Gastrocnemius medialis (tissue), 4 donors: ENCODE measurements at regions of chr1 and their contacts with region 1.

Region 1: DNA sequence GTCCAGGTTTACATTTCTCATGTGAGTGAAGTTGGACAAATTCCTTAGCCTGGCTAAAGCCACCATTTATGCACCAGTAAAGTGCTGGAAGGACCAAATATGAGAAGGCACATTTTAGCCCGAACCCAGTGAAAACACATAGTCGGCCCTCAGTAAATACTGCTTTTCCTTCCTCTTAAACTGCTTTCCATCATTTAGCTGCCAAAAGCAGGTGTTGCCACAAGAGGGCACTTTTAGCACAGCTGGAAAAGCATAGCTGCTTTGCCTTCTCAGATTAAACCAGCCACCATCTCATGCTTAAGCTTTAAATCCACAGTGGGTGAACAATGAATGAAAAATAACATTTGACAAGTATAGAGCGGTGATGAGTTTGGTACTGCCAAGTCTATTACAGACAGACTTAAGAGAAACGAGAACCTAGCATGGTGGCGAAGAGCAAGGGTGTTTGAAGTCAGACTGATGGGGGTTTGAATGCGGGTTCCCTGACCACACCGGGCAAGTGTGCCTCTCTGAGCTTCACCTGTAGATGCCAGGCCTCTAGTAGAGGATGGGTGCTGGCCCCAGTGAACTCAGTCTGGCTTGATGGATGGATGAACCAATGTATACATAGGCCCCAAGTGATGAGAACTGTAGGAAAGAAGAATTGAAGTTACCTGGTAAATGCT is 57.8 kb downstream of the SLC35D1 start:
- DNase-seq: peak in 1 of 2 donors; percentile 60
- ATAC-seq: peak; percentile 59 to 62
- H3K4me3 ChIP-seq: no peak overlapping the region
- H3K27ac ChIP-seq: no peak overlapping the region
- H3K4me1 ChIP-seq: peaks cover 11 to 14% of the 10 kb centered on the region in 2 donors
- H3K27me3 ChIP-seq: no peaks in the 10 kb centered on the region
- CTCF ChIP-seq: peak; percentile 53 to 72 (median 67)
- POLR2A ChIP-seq: no peak

Region 2: DNA sequence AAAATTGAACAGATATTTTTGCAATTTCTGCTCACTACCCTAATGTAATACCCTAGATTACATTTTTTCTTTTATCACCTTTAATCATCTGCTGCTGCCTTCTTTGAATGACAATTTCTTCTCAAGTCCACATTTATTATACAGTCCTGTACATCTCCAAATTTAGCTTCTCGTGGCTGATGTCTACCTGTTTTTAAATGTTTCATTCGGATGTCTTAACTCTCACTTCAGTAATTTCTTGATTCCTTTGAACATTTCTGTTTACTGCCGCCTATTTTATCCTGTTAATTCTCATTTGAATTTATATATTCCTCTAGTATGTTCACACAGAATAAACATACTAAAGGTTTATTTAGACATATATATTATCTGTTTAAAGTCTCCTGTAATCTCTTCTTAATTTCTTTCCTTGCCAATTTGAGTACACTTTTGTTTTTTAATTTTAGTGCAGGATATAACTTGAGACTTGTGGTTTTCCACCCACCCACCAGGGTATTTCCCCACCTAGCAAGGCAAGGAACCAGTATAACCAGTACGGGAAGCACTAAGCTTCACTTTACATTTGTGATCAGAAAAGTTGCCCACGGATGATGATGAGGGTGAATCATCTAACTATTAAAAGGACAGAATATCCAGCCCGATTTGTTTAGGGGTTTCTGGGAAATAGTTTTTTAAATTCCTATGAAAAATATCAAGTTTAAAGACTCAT is 207.8 kb before region 1 on chr1:
- in situ Hi-C with region 1: no loop called
- intact Hi-C with region 1: no loop called
- DNase-seq: no peak
- ATAC-seq: no peak
- H3K4me3 ChIP-seq: no peak overlapping the region
- H3K27ac ChIP-seq: no peak overlapping the region
- H3K4me1 ChIP-seq: no peaks in the 10 kb centered on the region
- H3K27me3 ChIP-seq: no peaks in the 10 kb centered on the region
- CTCF ChIP-seq: no peak
- POLR2A ChIP-seq: no peak

Region 3: DNA sequence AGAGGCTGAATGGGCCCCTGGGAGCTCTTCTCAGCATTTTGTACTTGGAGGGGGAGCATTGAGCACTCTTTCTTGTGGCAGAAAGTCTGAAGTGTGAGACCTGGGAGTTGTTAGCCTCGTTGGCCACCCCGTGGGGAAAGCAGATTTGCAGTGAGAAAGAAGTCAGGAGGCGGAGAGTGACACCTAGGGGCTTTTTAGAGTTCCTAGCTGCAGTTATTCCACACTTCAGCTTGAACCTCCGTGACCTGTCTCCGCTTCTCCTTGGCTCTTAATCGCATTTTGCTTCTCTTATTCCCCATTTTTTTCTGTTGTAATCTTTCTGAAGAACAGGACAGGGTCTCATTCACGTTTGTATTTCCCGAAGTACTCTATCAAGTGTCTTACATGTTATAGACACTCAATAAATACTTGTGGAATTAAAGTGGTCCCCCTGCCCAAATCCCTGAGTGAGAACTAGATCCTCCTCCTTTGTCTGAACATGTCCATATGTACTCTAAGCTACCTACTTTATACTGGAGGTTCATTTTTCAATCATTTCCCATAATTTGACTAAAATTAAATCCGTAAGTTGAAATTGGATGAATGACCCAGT is 153.1 kb after region 1 on chr1:
- in situ Hi-C with region 1: loop called (anchors 5 to 10 kb)
- intact Hi-C with region 1: loop called (anchors 1 kb)
- DNase-seq: peak; percentile 37 to 62
- ATAC-seq: peak; percentile 91 to 99
- H3K4me3 ChIP-seq: no peak overlapping the region
- H3K27ac ChIP-seq: no peak overlapping the region
- H3K4me1 ChIP-seq: no peaks in the 10 kb centered on the region
- H3K27me3 ChIP-seq: no peaks in the 10 kb centered on the region
- CTCF ChIP-seq: peak; percentile 63 to 90 (median 77)
- POLR2A ChIP-seq: no peak